ENCODE measurements at regions of chr17 and their contacts with region 1.

Region 1: DNA sequence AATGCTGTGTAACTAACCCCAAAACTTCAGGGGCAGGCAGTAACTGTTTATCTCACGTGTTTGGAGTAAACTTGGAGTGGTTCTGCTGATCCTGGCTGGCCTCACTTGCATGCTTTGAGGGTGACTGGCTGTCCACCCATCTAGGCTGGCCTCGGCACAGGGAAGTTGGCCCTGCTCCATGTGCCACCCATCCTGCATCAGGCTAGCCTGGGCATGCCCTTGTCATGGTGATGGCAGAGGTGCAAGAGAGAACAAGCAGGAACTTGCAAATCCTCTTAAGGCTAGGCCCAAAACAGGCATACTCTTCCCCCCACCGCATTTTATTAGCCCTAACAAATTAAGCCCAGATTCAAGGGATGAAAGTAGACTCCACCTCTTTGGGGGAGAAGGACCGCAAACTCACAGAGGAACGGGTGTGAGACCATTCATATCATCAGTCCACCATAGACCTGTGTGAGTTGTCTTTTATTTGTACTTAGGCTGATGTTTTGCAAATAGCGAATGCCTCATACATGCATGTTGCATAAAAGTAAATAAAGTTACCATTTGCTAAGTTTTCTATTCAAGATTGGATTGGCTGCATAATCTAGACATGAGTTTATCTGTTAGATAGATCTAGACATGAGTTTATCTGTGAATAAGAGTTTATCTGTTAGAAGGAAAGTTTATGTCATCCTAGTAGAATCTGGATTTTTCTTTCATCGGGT is 221.0 kb downstream of the CCDC182 start:
- DNase-seq: peak; percentile 86 to 90
- ATAC-seq: peak; percentile 59
- H3K4me3 ChIP-seq: no peak overlapping the region
- H3K27ac ChIP-seq: peak overlapping the region; percentile 13 to 44
- H3K4me1 ChIP-seq: peaks cover 0 to 5% of the 10 kb centered on the region in 2 donors
- H3K27me3 ChIP-seq: no peaks in the 10 kb centered on the region

Region 2: DNA sequence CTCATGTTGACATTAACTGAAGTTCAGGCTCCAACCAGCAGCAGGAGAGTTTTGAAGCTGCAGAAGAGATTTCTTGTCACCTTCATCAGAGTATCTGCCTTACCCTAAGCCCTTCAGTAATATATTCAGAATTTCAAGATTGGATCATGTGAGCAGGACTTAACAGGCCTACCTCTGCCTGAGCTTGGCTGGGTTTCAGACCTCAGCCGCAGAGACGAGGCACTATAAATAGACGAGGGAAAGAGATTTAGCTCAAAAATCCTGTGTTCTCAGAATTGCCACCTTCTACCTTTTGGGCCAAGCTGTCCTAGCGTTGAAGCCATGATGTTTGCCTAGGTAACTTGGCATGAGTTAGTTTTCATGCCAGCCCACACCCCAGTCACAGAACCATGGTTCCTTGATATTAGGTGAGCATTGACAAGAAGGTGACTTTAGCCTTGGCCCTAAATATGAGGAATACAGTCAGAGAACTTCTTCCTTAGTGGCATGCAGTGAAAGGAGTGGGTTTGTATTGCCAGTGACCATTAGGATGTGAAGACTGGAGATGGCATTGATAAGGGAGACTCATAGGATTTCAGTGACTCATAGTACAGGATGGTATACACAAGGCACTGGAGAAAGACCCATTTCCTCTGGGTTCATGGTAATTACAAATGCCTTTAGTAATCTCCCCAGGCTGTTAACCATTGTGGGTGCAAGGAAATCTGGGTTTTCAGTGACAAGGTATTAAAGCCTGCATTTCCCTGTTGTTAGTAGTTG is 43.5 kb before region 1 on chr17:
- intact Hi-C with region 1: loop called in 1 of 2 experiments (anchors 5 kb)
- DNase-seq: no peak
- ATAC-seq: no peak
- H3K4me3 ChIP-seq: no peak overlapping the region
- H3K27ac ChIP-seq: no peak overlapping the region
- H3K4me1 ChIP-seq: peaks cover 4 to 11% of the 10 kb centered on the region in 2 donors
- H3K27me3 ChIP-seq: no peaks in the 10 kb centered on the region

Measured in aorta (tissue), 5 donors.